A673 (cell line): ENCODE measurements at regions of chr1 and their contacts with region 1.

Region 1: GRCh38 chr1:95168028-95168427 is 50.9 kb downstream of the TLCD4 start:
- DNase-seq: no peak
- H3K4me3 ChIP-seq: no peak overlapping the region
- H3K27ac ChIP-seq: no peak overlapping the region
- H3K4me1 ChIP-seq: no peaks in the 10 kb centered on the region
- H3K27me3 ChIP-seq: no peaks in the 10 kb centered on the region
- CTCF ChIP-seq: no peak

Region 2: GRCh38 chr1:95023399-95024043 is 144.5 kb before region 1 on chr1:
- CTCF ChIA-PET with region 1: no interaction called
- POLR2A ChIA-PET with region 1: no interaction called
- intact Hi-C with region 1: no loop called
- DNase-seq: peak; percentile 77
- H3K4me3 ChIP-seq: no peak overlapping the region
- H3K27ac ChIP-seq: peak overlapping the region; percentile 20
- H3K4me1 ChIP-seq: peaks cover 26% of the 10 kb centered on the region
- H3K27me3 ChIP-seq: no peaks in the 10 kb centered on the region
- CTCF ChIP-seq: no peak

Region 3: GRCh38 chr1:95216292-95216990 is 48.4 kb after region 1 on chr1:
- CTCF ChIA-PET with region 1: no interaction called
- POLR2A ChIA-PET with region 1: no interaction called
- intact Hi-C with region 1: loop called (anchors 1 kb)
- DNase-seq: no peak
- H3K4me3 ChIP-seq: no peak overlapping the region
- H3K27ac ChIP-seq: no peak overlapping the region
- H3K4me1 ChIP-seq: no peaks in the 10 kb centered on the region
- H3K27me3 ChIP-seq: no peaks in the 10 kb centered on the region
- CTCF ChIP-seq: no peak